ENCODE measurements at regions of chr2 and their contacts with region 1.

Region 1: DNA sequence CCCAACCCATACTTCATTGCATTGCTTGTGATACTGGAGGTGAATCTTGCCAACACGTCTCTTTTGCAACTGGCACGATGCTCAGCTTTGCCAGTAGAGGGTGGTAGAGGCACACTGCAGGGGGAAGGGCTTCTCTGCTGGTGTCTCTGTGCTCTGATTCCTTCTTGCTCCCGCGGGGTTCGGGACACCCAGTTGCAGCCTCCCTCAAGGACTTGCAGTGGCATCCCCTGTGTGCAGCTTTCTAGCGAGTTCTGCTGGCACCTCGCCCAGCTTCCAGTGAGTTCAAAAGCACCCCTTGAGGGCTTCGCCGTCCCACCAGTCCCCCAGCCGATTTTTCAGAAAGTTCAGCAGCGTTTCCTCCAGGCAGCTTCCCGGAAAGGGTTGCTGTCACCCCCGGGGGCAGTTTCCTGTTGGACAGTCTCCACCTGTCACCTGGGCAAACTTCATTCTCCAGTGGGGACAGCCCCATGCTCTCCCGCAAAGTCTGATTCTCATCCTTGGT is 35.3 kb upstream of the EN1 start:
- DNase-seq: peak; percentile 66
- ATAC-seq: peak; percentile 73
- H3K4me3 Mint-ChIP-seq: peak overlapping the region; percentile 52
- H3K27ac Mint-ChIP-seq: no peak overlapping the region
- H3K4me1 Mint-ChIP-seq: peaks cover 9% of the 10 kb centered on the region
- H3K27me3 Mint-ChIP-seq: no peaks in the 10 kb centered on the region

Region 2: DNA sequence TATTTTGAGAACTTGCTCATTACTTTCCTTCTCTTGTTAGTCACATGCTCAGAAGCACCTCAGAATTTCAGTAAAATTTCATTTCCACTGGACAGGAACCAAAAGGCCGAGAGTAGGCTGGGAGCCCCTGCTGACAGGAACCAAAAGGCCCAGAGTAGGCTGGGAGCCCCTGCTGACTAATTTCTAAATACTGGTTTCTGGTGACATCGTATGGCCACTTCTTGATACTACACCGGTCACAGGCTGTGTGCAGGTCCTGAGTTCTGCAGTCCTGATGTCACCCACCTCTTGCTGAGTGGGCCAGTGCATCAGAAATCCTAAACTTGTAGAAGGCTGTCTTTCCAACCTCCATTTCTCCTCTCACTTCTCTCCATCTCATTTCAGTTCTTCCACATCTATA is 17.7 kb before region 1 on chr2:
- CTCF ChIA-PET with region 1: interaction called, 32 read pairs
- DNase-seq: no peak
- ATAC-seq: peak; percentile 75
- H3K4me3 Mint-ChIP-seq: no peak overlapping the region
- H3K27ac Mint-ChIP-seq: no peak overlapping the region
- H3K4me1 Mint-ChIP-seq: no peaks in the 10 kb centered on the region
- H3K27me3 Mint-ChIP-seq: peaks cover 42% of the 10 kb centered on the region

Region 3: GRCh38 chr2:118902266-118903028 is 19.7 kb after region 1 on chr2:
- CTCF ChIA-PET with region 1: no interaction called
- DNase-seq: no peak
- ATAC-seq: no peak
- H3K4me3 Mint-ChIP-seq: no peak overlapping the region
- H3K27ac Mint-ChIP-seq: no peak overlapping the region
- H3K4me1 Mint-ChIP-seq: peaks cover 2% of the 10 kb centered on the region
- H3K27me3 Mint-ChIP-seq: no peaks in the 10 kb centered on the region

Region 4: GRCh38 chr2:119126650-119127049 is 243.9 kb after region 1 on chr2:
- CTCF ChIA-PET with region 1: interaction called, 10 read pairs
- DNase-seq: peak; percentile 42
- ATAC-seq: no peak
- H3K4me3 Mint-ChIP-seq: no peak overlapping the region
- H3K27ac Mint-ChIP-seq: no peak overlapping the region
- H3K4me1 Mint-ChIP-seq: no peaks in the 10 kb centered on the region
- H3K27me3 Mint-ChIP-seq: no peaks in the 10 kb centered on the region

Region 5: GRCh38 chr2:119174216-119175037 is 291.7 kb after region 1 on chr2:
- CTCF ChIA-PET with region 1: interaction called, 10 read pairs
- DNase-seq: peak; percentile 52
- ATAC-seq: no peak
- H3K4me3 Mint-ChIP-seq: no peak overlapping the region
- H3K27ac Mint-ChIP-seq: no peak overlapping the region
- H3K4me1 Mint-ChIP-seq: no peaks in the 10 kb centered on the region
- H3K27me3 Mint-ChIP-seq: no peaks in the 10 kb centered on the region

Region 6: GRCh38 chr2:119264781-119265692 is 382.3 kb after region 1 on chr2:
- CTCF ChIA-PET with region 1: interaction called, 12 read pairs
- DNase-seq: peak; percentile 52
- ATAC-seq: peak; percentile 49
- H3K4me3 Mint-ChIP-seq: no peak overlapping the region
- H3K27ac Mint-ChIP-seq: no peak overlapping the region
- H3K4me1 Mint-ChIP-seq: no peaks in the 10 kb centered on the region
- H3K27me3 Mint-ChIP-seq: peaks cover 5% of the 10 kb centered on the region

Region 7: DNA sequence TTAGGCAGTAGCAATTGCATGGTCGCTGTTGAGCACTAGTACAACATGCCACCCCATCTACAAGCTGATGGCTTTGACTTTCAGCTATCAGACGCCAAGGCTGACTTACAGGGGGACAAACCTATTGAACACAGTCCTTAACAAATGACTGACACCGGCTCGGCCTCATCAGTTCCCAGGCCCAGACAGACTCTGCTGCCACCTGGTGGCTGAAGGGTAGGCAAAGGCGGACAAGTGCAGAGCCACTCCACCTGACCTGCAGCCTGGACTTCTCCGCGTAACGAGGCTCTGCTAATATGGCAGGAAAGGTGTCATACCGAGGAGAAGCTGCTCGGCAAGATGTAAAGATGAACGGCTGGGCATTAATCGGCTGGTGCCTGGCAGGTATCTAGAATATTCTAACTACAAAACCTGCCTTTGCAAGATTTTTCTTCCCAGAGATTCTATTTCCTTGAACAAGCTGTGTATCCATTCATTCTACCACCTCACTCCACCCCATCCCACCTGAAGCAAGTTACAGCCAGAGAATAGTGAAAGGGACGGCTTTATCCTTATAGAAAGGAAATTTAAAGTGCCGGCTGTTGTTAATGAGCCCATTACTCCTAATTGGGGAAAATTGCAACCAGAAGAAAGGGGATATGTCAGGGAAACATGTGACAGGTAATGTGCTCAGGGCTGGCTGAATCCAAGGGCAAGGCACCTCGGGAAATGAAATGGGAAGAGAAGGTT is 408.3 kb after region 1 on chr2:
- CTCF ChIA-PET with region 1: interaction called, 12 read pairs
- DNase-seq: peak; percentile 73
- ATAC-seq: peak; percentile 60
- H3K4me3 Mint-ChIP-seq: no peak overlapping the region
- H3K27ac Mint-ChIP-seq: no peak overlapping the region
- H3K4me1 Mint-ChIP-seq: no peaks in the 10 kb centered on the region
- H3K27me3 Mint-ChIP-seq: no peaks in the 10 kb centered on the region

Region 8: DNA sequence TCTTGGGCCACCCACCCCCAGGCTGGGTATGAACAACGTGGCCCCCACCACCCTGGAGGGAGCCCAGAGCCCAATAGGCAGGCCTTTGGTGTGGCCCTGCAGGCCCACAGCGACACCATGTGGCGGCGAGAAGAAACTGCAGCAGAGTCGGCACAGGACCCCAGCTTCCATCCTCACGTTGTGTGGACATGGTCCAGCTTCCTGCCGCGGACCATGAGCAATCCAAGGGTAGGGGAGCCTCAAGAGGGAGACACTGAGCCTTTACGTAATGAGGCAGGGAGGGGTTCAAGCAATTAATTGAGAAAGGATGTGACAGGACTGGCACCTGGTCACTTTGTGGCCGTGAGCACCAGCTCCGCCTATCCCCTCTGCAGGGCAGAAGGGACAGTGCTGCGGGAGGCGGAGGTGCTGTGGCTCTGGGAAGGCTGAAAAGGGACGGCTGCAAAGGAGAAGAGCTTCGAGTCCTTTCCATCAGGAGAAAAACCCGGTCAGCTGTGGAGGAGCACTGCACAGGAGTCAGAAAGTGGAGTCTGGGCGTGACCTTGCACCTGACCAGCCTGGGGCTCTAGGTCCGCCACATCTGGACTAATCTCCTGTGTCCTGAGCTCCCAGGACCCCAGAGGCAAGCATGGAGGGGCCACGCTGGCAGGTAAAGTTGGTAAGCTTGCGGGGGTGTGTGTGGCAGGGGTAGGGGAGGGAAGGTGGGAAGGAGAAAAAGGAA is 593.7 kb after region 1 on chr2:
- CTCF ChIA-PET with region 1: interaction called, 14 read pairs
- DNase-seq: peak; percentile 51
- ATAC-seq: peak; percentile 68
- H3K4me3 Mint-ChIP-seq: no peak overlapping the region
- H3K27ac Mint-ChIP-seq: no peak overlapping the region
- H3K4me1 Mint-ChIP-seq: no peaks in the 10 kb centered on the region
- H3K27me3 Mint-ChIP-seq: no peaks in the 10 kb centered on the region

Region 9: DNA sequence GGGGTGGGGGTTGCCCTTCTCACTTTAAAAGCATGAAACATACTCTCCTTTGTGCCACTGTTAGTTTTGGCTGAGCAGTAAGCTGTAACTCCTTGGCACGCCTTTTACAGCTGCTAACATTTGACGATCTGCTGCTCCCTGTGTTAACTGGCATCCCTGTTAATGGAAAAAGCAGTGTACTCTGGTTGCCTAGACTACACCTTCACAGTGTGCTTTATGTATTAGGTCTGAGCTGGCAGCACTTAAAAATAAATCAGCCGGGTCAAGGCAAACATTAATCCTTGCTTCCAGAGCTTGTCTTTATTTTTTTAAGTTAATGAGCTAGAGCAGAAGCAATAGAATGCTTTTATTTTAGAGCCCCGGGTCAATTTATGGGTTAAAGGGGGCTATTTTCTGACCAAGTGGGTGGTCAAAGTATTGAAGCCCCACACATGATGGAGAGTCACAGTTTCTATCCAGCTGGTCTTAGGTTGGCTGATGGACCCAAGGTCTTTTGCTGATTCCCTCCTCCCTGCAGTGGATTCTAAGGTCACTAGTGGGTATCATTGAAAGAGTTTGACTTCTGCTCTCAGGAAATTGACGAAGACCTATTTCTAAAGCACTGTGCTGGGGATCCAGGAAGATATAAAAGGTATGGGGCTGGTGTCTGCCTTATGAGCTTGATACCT is 716.0 kb after region 1 on chr2:
- CTCF ChIA-PET with region 1: no interaction called
- DNase-seq: no peak
- ATAC-seq: no peak
- H3K4me3 Mint-ChIP-seq: no peak overlapping the region
- H3K27ac Mint-ChIP-seq: no peak overlapping the region
- H3K4me1 Mint-ChIP-seq: no peaks in the 10 kb centered on the region
- H3K27me3 Mint-ChIP-seq: peaks cover 16% of the 10 kb centered on the region